HEK293 (cell line): ENCODE measurements at regions of chr2 and their contacts with region 1.

Region 1: GRCh38 chr2:170361090-170361936 is 183.4 kb downstream of the MYO3B start:
- H3K4me3 ChIP-seq: no peak overlapping the region
- H3K27ac ChIP-seq: no peak overlapping the region
- H3K4me1 ChIP-seq: no peaks in the 10 kb centered on the region
- CTCF ChIP-seq: peak; percentile 47; the same call in 1 of the 2 replicates

Region 2: DNA sequence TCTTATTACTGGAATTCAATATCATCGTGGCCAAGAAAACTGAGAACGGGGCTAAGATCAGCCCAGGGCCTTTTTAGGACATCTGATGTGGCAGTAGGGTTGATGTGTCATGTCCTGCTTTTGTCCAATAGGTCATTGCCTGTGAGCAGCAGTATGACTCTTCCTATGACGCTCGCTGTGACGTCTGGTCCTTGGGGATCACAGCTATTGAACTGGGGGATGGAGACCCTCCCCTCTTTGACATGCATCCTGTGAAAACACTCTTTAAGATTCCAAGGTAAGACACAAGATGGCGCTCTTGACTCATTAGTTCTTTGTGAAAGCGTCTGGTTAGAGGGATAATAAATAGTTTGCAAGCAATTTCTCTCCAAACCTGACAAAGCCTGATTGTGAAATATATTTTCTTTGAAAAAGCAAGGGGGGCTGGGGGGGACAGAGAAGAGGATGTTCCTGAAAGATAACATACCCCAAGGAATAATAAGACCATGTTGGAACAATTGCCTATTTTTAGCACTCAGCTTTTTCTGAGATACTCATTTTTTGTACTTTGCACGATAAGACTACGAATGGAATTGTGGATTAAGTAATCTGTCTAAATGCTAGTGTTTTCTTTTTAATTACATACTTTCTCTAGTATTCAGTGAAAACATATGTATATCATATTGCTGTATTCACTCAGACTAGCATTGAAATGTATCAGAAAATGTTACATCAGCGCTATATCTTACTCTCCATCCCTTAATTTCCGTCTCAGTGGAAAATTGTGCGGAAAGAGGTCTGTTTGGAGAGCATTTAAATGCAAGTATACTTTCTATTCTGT is 125.2 kb before region 1 on chr2:
- CTCF ChIA-PET with region 1: interaction called, 18 read pairs
- POLR2A ChIA-PET with region 1: no interaction called
- H3K4me3 ChIP-seq: no peak overlapping the region
- H3K27ac ChIP-seq: no peak overlapping the region
- H3K4me1 ChIP-seq: no peaks in the 10 kb centered on the region
- CTCF ChIP-seq: peak; percentile 54; the same call in 1 of the 2 replicates

Region 3: GRCh38 chr2:170252414-170252813 is 108.9 kb before region 1 on chr2:
- CTCF ChIA-PET with region 1: interaction called, 10 read pairs
- POLR2A ChIA-PET with region 1: no interaction called
- H3K4me3 ChIP-seq: no peak overlapping the region
- H3K27ac ChIP-seq: no peak overlapping the region
- H3K4me1 ChIP-seq: no peaks in the 10 kb centered on the region
- CTCF ChIP-seq: no peak

Region 4: DNA sequence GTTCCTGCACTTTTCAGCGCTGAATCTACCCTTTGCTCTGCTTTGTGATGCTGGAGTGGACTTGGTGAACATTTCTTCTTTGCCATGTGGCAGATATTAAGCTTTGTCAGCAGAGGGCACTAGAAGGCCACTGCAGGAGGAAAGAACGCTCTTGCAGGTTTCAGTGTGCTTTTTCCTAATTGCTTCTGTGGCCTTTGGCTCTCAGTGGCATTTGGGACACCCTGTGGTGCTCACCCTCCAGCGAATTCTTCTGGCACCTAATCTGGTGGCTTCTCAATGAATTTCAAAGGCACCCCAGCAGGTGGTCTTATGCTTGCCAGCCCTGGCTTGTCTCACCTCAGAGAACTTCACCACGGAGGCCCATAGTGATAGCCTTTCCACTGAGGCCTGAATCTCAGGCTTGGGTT is 36.7 kb before region 1 on chr2:
- CTCF ChIA-PET with region 1: interaction called, 20 read pairs
- POLR2A ChIA-PET with region 1: no interaction called
- H3K4me3 ChIP-seq: no peak overlapping the region
- H3K27ac ChIP-seq: no peak overlapping the region
- H3K4me1 ChIP-seq: no peaks in the 10 kb centered on the region
- CTCF ChIP-seq: peak; percentile 79

Region 5: DNA sequence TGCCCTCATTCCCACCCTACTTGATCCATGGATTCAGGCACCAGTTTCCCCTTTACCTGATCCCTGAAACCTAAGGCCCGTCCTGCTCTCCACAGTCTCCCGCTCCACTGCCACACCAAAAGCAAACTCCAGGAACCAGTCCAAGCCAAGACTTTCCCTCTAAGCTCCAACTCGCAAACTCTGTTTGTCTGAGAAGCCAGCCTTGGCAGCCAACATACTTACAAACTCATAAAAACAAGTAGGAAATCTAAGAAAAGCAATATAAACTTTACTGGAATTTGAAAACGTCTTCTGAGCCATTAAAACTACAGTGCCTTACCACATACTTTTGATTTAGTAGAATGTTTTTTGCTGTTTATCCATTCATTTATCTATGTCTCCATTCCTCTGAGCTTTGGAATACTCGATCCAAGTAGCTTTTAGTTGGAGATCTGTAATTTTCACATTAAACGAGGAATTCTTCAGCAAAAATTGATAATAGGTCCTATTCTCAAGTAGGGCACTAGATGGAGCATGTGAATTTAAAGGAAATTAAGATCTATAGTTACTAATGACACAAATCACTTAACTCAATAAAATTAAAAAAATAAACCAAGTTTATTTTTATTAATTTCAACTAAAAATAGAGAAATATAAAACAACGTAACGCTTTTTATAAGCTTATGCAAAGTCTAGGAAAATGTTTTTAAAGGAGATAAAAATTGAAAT is 16.3 kb after region 1 on chr2:
- CTCF ChIA-PET with region 1: interaction called, 10 read pairs
- POLR2A ChIA-PET with region 1: no interaction called
- H3K4me3 ChIP-seq: no peak overlapping the region
- H3K27ac ChIP-seq: no peak overlapping the region
- H3K4me1 ChIP-seq: peaks cover 7% of the 10 kb centered on the region; the same call in 1 of the 2 replicates
- CTCF ChIP-seq: no peak